Right ventricle myocardium inferior (tissue), 1 donor: ENCODE measurements at regions of chr18 and their contacts with region 1.

Region 1: GRCh38 chr18:31146809-31147208 is 15.8 kb downstream of the DSC1 start:
- DNase-seq: no peak
- ATAC-seq: no peak

Region 2: GRCh38 chr18:31077878-31078277 is 68.9 kb before region 1 on chr18:
- intact Hi-C with region 1: loop called (anchors 10 kb)
- DNase-seq: no peak
- ATAC-seq: no peak

Region 3: GRCh38 chr18:31162419-31162793 is 15.6 kb after region 1 on chr18:
- intact Hi-C with region 1: loop called (anchors 2 kb)
- DNase-seq: no peak
- ATAC-seq: no peak